Transverse colon (tissue), 4 donors: ENCODE measurements at regions of chr18 and their contacts with region 1.

Region 1: GRCh38 chr18:75068682-75069430 is 140.1 kb downstream of the PTGR3 start:
- DNase-seq: no peak
- H3K4me3 ChIP-seq: no peak overlapping the region
- H3K27ac ChIP-seq: no peak overlapping the region
- H3K4me1 ChIP-seq: peaks cover 0 to 8% (median 0%) of the 10 kb centered on the region in 4 donors
- H3K27me3 ChIP-seq: no peaks in the 10 kb centered on the region
- CTCF ChIP-seq: no peak
- EP300 ChIP-seq: no peak
- POLR2A ChIP-seq: no peak

Region 2: DNA sequence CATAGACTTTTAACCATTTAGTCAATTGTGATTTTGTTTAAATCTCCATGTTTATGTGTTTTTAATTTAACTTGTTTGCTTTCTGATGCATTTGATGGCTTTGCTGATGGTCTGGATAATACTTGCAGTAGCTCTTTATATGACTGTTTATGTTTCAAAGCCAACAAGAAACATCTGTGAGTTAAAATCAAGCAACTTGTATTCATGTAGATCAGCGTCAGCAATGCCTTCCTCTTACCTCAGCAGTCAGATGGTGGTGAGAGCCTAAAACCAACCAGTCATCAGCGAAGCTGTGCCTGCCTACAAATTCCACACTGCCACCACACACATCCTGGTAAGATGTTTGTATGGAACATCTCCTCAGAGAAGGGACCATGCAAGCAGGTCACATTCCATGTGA is 91.8 kb before region 1 on chr18:
- in situ Hi-C with region 1: no loop called
- intact Hi-C with region 1: loop called (anchors 1 kb)
- DNase-seq: no peak
- H3K4me3 ChIP-seq: no peak overlapping the region
- H3K27ac ChIP-seq: peak overlapping the region in 1 of 4 donors; percentile 27
- H3K4me1 ChIP-seq: peaks cover 4 to 14% (median 6%) of the 10 kb centered on the region in 4 donors
- H3K27me3 ChIP-seq: no peaks in the 10 kb centered on the region
- CTCF ChIP-seq: no peak
- EP300 ChIP-seq: no peak
- POLR2A ChIP-seq: no peak

Region 3: DNA sequence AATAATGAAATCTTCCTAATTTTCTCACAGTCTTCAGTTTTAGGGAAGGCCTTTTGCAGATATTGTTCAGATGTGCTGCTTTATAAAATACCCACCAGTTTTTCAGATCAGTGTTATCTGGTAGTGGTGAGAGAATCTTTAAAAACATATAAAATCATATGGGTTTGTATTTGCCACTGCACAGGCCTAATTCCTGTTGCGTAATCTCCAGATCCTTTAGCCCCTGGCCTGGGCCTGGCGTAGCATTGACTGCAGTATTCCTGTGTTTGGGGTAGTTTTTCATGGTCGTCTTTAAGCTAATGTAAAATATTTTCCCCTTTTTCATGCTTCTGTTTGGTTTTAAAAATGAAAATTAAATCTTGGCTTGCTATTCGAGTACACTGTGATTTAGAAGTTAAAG is 184.9 kb after region 1 on chr18:
- in situ Hi-C with region 1: no loop called
- intact Hi-C with region 1: no loop called
- DNase-seq: no peak
- H3K4me3 ChIP-seq: no peak overlapping the region
- H3K27ac ChIP-seq: peak overlapping the region in 1 of 4 donors; percentile 1
- H3K4me1 ChIP-seq: peaks cover 1 to 30% (median 9%) of the 10 kb centered on the region in 4 donors
- H3K27me3 ChIP-seq: no peaks in the 10 kb centered on the region
- CTCF ChIP-seq: no peak
- EP300 ChIP-seq: no peak
- POLR2A ChIP-seq: no peak